Heart right ventricle (tissue), 16 donors: ENCODE measurements at regions of chr16 and their contacts with region 1.

Region 1: GRCh38 chr16:8621572-8622314 is at the start of gene METTL22:
- DNase-seq: peak; percentile 89 to 96
- ATAC-seq: peak; percentile 98 to 99 (median 99)
- H3K4me3 ChIP-seq: peak within 1 kb of the TSS; percentile 71 to 99 (median 84)
- H3K27ac ChIP-seq: peak within 1 kb of the TSS in 9 of 10 donors; percentile 57 to 92 (median 85)
- H3K4me1 ChIP-seq: peaks cover 0 to 24% (median 19%) of the 10 kb centered on the region in 9 donors
- H3K27me3 ChIP-seq: no peaks in the 10 kb centered on the region
- CTCF ChIP-seq: no peak
- total RNA-seq, gene METTL22: 23.5 to 36.4 (median 32.9) TPM

Region 2: GRCh38 chr16:8552487-8553221 is 69.1 kb before region 1 on chr16:
- intact Hi-C with region 1: no loop called
- DNase-seq: no peak
- ATAC-seq: no peak
- H3K4me3 ChIP-seq: no peak overlapping the region
- H3K27ac ChIP-seq: no peak overlapping the region
- H3K4me1 ChIP-seq: no peaks in the 10 kb centered on the region
- H3K27me3 ChIP-seq: peaks cover 0 to 63% (median 46%) of the 10 kb centered on the region in 7 donors
- CTCF ChIP-seq: no peak

Region 3: DNA sequence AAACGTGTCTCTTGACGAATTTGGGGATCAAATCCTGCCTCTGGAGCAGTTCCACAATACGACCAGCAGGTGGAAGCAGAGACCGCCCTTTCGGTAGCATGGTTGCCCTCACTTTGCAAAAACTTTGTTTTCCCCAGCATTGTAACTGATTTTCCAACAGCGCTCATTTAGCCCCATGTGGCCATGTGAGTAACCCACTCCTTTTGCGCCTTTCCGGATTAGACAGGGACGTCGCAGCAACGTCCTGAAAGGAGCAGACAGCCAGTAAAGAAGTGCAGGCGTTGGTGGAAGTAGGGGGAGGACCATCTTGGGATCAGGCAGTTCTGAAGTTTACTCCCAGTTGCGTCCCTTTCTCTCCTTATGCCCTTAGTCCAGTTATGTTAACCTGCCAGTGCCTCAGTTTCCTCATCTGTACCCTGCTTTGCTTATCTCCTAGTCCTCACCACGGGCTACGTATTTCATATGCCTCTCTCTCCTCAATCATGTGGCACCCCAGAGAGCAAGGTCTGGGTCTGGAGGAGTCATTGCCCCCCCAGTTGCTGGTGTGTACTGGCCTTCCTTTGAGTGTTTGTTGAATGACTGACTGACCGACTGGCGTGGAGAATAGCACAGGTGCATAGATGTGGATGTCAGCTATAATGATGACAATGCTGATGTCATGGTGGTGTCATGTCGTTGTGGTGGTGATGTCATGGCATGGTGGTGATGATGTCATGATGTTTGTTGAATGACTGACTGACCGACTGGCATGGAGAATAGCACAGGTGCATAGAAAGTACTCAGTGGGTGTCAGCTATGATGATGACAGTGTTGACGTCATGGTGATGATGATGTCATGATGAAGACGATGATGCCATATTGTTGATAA is 53.8 kb before region 1 on chr16:
- intact Hi-C with region 1: loop called in 2 of 10 experiments (anchors 5 kb)
- DNase-seq: peak; percentile 40 to 70
- ATAC-seq: peak; percentile 65 to 84 (median 74)
- H3K4me3 ChIP-seq: no peak overlapping the region
- H3K27ac ChIP-seq: no peak overlapping the region
- H3K4me1 ChIP-seq: peaks cover 0 to 20% (median 0%) of the 10 kb centered on the region in 9 donors
- H3K27me3 ChIP-seq: peaks cover 0 to 18% (median 10%) of the 10 kb centered on the region in 7 donors
- CTCF ChIP-seq: peak; percentile 93 to 98 (median 97)

Region 4: GRCh38 chr16:8572919-8573724 is 48.6 kb before region 1 on chr16:
- intact Hi-C with region 1: loop called in 2 of 10 experiments (anchors 5 kb)
- DNase-seq: no peak
- ATAC-seq: peak in 1 of 8 donors; percentile 32
- H3K4me3 ChIP-seq: no peak overlapping the region
- H3K27ac ChIP-seq: no peak overlapping the region
- H3K4me1 ChIP-seq: peaks cover 0 to 14% (median 0%) of the 10 kb centered on the region in 9 donors
- H3K27me3 ChIP-seq: peaks cover 0 to 52% (median 34%) of the 10 kb centered on the region in 7 donors
- CTCF ChIP-seq: peak in 7 of 9 donors; percentile 27 to 55 (median 46)

Region 5: DNA sequence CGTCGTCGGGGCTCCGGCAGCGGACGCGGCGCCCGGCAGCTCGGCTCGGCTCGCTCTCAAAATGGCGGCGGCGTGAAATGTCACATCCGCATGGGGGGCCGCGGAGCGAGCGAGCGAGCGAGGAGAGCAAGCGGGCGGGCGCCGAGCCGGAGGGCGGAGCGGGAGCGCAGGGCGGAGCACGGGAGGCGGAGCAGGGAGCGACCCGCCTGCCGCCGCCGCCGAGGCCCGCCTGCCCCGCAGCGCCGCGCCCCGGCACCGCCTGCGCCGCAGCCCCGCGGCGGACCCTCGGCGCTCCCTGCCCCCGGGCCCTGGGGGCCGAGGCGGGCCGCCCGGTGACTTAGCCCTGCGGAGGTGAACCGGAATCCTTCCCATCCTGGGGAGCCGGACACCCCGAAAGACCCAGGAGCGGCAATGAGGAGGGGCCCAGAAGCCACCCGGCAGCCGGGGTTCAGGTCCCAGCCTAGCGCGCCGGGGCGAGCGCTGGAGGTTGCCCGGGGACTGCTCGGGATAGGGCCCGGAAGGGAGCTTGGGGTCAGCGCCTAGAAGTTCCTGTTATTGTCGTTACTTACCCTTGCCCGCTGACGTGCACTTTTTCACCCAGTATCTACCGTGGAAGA is 342.2 kb after region 1 on chr16 and contains the start of gene USP7:
- intact Hi-C with region 1: no loop called
- DNase-seq: peak; percentile 94 to 95
- ATAC-seq: peak; percentile 92 to 97 (median 96)
- H3K4me3 ChIP-seq: peak within 1 kb of the TSS; percentile 69 to 96 (median 81)
- H3K27ac ChIP-seq: peak within 1 kb of the TSS; percentile 68 to 94 (median 85)
- H3K4me1 ChIP-seq: peaks cover 14 to 50% (median 39%) of the 10 kb centered on the region in 9 donors
- H3K27me3 ChIP-seq: no peaks in the 10 kb centered on the region
- CTCF ChIP-seq: peak in 1 of 9 donors; percentile 14
- total RNA-seq, gene USP7: 59.0 to 84.8 (median 67.1) TPM